H1 (cell line): ENCODE measurements at regions of chr12 and their contacts with region 1.

Region 1: DNA sequence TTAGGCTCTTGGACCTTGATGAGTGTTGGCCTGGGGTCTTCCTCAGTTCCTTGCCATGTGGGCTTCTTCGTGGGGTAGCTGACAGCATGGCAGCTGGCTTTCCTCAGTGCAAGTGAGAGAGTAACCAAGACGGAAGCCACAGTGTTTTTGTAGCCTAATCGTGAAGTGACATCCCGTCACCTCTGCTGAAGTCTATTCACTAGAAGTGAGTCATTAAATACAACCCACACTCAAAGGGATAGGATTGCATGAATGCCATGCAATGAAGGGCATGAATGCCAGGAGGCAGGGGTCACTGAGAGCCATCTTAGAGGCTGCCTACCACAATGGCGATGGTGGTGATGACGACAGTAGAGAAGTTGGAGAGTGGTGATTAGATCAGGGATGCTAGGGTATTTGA is 13.5 kb upstream of the ASIC1 start:
- DNase-seq: no peak
- H3K4me3 ChIP-seq: no peak overlapping the region
- H3K27ac ChIP-seq: no peak overlapping the region
- H3K4me1 ChIP-seq: no peaks in the 10 kb centered on the region
- H3K27me3 ChIP-seq: peaks cover 0 to 5% (median under 1%) of the 10 kb centered on the region in 4 experiments; a peak in 3 of 7 replicates
- CTCF ChIP-seq: no peak
- EP300 ChIP-seq: no peak
- POLR2A ChIP-seq: no peak
- RAD21 ChIP-seq: no peak

Region 2: GRCh38 chr12:49842519-49843352 is 201.1 kb before region 1 on chr12 and contains the start of gene BCDIN3D:
- CTCF ChIA-PET with region 1: no interaction called
- POLR2A ChIA-PET with region 1: no interaction called
- DNase-seq: peak in 1 of 2 experiments; percentile 83
- H3K4me3 ChIP-seq: peak within 1 kb of the TSS; percentile 63 to 90 (median 84)
- H3K27ac ChIP-seq: peak within 1 kb of the TSS; percentile 62
- H3K4me1 ChIP-seq: peaks cover 2 to 5% (median 4%) of the 10 kb centered on the region in 4 experiments; a peak in 4 of 7 replicates
- H3K27me3 ChIP-seq: no peaks in the 10 kb centered on the region
- CTCF ChIP-seq: no peak
- EP300 ChIP-seq: no peak
- POLR2A ChIP-seq: peak in 1 of 2 experiments; percentile 80; a peak in 2 of 3 replicates
- RAD21 ChIP-seq: no peak
- total RNA-seq, gene BCDIN3D: 2.4 and 2.5 TPM in 2 replicates

Region 3: DNA sequence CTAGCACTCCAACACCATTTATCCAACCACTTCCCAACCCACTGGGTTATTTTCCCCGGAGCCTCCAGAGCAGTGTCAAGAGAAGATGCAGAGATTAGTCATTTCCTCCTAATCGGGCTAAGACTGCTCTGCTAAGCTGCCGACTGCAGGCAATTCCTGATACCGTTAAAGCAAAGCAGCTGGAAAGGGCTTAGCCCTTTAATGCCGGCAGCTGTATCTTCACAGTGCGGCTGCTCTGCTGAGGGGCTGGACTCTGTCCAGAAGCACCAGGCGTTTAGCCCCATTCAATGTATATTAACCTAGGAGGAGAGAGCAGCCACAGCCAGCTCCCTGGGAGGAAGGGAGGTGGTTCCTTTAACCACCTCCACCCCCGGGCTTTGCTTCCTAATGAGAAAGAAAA is 60.0 kb before region 1 on chr12:
- CTCF ChIA-PET with region 1: interaction called, 19 read pairs
- POLR2A ChIA-PET with region 1: no interaction called
- DNase-seq: no peak
- H3K4me3 ChIP-seq: no peak overlapping the region
- H3K27ac ChIP-seq: no peak overlapping the region
- H3K4me1 ChIP-seq: peaks cover 3 to 11% (median 7%) of the 10 kb centered on the region in 4 experiments
- H3K27me3 ChIP-seq: no peaks in the 10 kb centered on the region
- CTCF ChIP-seq: no peak
- EP300 ChIP-seq: no peak
- POLR2A ChIP-seq: no peak
- RAD21 ChIP-seq: no peak

Region 4: GRCh38 chr12:50016501-50017475 is 27.1 kb before region 1 on chr12:
- CTCF ChIA-PET with region 1: interaction called, 37 read pairs
- POLR2A ChIA-PET with region 1: no interaction called
- DNase-seq: no peak
- H3K4me3 ChIP-seq: no peak overlapping the region
- H3K27ac ChIP-seq: no peak overlapping the region
- H3K4me1 ChIP-seq: peaks cover 0 to 2% (median 0%) of the 10 kb centered on the region in 4 experiments; a peak in 1 of 7 replicates
- H3K27me3 ChIP-seq: no peaks in the 10 kb centered on the region
- CTCF ChIP-seq: no peak
- EP300 ChIP-seq: no peak
- POLR2A ChIP-seq: no peak
- RAD21 ChIP-seq: no peak

Region 5: GRCh38 chr12:50025187-50026059 is 18.4 kb before region 1 on chr12 and contains the start of gene RACGAP1:
- CTCF ChIA-PET with region 1: interaction called, 37 read pairs
- POLR2A ChIA-PET with region 1: interaction called, 3 read pairs
- DNase-seq: peak; percentile 90 to 94
- H3K4me3 ChIP-seq: peak within 1 kb of the TSS; percentile 81 to 86 (median 82)
- H3K27ac ChIP-seq: no peak within 1 kb of the TSS
- H3K4me1 ChIP-seq: no peaks in the 10 kb centered on the region
- H3K27me3 ChIP-seq: no peaks in the 10 kb centered on the region
- CTCF ChIP-seq: no peak
- EP300 ChIP-seq: no peak
- POLR2A ChIP-seq: no peak; a peak in 1 of 3 replicates
- RAD21 ChIP-seq: no peak
- total RNA-seq, gene RACGAP1: 63.5 and 66.3 TPM in 2 replicates

Region 6: GRCh38 chr12:50074936-50075807 is 31.3 kb after region 1 on chr12:
- CTCF ChIA-PET with region 1: interaction called, 296 read pairs
- POLR2A ChIA-PET with region 1: no interaction called
- DNase-seq: peak in 1 of 2 experiments; percentile 93
- H3K4me3 ChIP-seq: no peak overlapping the region
- H3K27ac ChIP-seq: no peak overlapping the region
- H3K4me1 ChIP-seq: peaks cover 0 to 6% (median 3%) of the 10 kb centered on the region in 4 experiments; a peak in 5 of 7 replicates
- H3K27me3 ChIP-seq: peaks cover 0 to 4% (median under 1%) of the 10 kb centered on the region in 4 experiments; a peak in 2 of 7 replicates
- CTCF ChIP-seq: peak; percentile 92 to 94 (median 94)
- EP300 ChIP-seq: no peak
- POLR2A ChIP-seq: no peak
- RAD21 ChIP-seq: peak; percentile 96 to 97

Region 7: GRCh38 chr12:50157259-50157658 is 113.4 kb after region 1 on chr12:
- CTCF ChIA-PET with region 1: no interaction called
- POLR2A ChIA-PET with region 1: no interaction called
- DNase-seq: no peak
- H3K4me3 ChIP-seq: no peak overlapping the region
- H3K27ac ChIP-seq: no peak overlapping the region
- H3K4me1 ChIP-seq: no peaks in the 10 kb centered on the region
- H3K27me3 ChIP-seq: no peaks in the 10 kb centered on the region
- CTCF ChIP-seq: no peak
- EP300 ChIP-seq: no peak
- POLR2A ChIP-seq: no peak
- RAD21 ChIP-seq: no peak